ENCODE measurements at regions of chr17 and their contacts with region 1.

Region 1: GRCh38 chr17:4966844-4967538 is 626 bp downstream of the SPAG7 start:
- DNase-seq: peak; percentile 97
- ATAC-seq: peak; percentile 93
- H3K4me3 Mint-ChIP-seq: no peak overlapping the region
- H3K27ac Mint-ChIP-seq: peak overlapping the region; percentile 90
- H3K4me1 Mint-ChIP-seq: peaks cover 22% of the 10 kb centered on the region
- H3K27me3 Mint-ChIP-seq: peaks cover 10% of the 10 kb centered on the region
- CTCF ChIP-seq: no peak

Region 2: DNA sequence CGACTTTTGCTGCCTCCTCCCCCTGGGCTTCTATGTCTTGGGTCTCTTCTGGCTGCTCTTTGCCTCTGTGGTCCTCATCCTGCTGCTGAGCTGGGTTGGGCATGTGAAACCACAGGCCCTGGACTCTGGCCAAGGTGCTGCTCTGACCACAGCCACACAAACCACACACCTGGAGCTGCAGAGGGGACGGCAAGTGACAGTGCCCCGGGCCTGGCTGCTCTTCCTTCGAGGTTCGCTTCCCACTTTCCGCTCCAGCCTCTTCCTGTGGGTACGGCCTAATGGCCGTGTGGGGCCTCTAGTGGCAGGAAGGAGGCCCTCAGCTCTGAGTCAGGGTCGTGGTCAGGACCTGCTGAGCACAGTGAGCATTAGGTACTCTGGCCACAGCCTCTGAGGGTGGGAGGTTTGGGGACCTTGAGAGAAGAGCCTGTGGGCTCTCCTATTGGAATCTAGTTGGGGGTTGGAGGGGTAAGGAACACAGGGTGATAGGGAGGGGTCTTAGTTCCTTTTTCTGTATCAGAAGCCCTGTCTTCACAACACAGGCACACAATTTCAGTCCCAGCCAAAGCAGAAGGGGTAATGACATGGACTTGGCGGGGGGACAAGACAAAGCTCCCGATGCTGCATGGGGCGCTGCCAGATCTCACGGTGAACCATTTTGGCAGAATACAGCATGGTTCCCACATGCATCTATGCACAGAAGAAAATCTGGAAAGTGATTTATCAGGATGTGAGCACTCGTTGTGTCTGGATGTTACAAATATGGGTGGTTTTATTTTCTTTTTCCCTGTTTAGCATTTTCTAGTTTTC is 32.6 kb before region 1 on chr17:
- CTCF ChIA-PET with region 1: interaction called, 17 read pairs
- POLR2A ChIA-PET with region 1: interaction called, 38 read pairs
- DNase-seq: peak; percentile 50
- ATAC-seq: peak; percentile 81
- H3K4me3 Mint-ChIP-seq: no peak overlapping the region
- H3K27ac Mint-ChIP-seq: no peak overlapping the region; the same call in 1 of the 2 replicates
- H3K4me1 Mint-ChIP-seq: peaks cover 18% of the 10 kb centered on the region
- H3K27me3 Mint-ChIP-seq: no peaks in the 10 kb centered on the region
- CTCF ChIP-seq: no peak

Region 3: GRCh38 chr17:4948931-4949320 is 18.1 kb before region 1 on chr17:
- CTCF ChIA-PET with region 1: interaction called, 18 read pairs
- POLR2A ChIA-PET with region 1: interaction called, 45 read pairs
- DNase-seq: peak; percentile 78
- ATAC-seq: peak; percentile 40
- H3K4me3 Mint-ChIP-seq: peak overlapping the region; percentile 91
- H3K27ac Mint-ChIP-seq: peak overlapping the region; percentile 82; the same call in 1 of the 2 replicates
- H3K4me1 Mint-ChIP-seq: peaks cover 47% of the 10 kb centered on the region
- H3K27me3 Mint-ChIP-seq: no peaks in the 10 kb centered on the region
- CTCF ChIP-seq: no peak

Region 4: DNA sequence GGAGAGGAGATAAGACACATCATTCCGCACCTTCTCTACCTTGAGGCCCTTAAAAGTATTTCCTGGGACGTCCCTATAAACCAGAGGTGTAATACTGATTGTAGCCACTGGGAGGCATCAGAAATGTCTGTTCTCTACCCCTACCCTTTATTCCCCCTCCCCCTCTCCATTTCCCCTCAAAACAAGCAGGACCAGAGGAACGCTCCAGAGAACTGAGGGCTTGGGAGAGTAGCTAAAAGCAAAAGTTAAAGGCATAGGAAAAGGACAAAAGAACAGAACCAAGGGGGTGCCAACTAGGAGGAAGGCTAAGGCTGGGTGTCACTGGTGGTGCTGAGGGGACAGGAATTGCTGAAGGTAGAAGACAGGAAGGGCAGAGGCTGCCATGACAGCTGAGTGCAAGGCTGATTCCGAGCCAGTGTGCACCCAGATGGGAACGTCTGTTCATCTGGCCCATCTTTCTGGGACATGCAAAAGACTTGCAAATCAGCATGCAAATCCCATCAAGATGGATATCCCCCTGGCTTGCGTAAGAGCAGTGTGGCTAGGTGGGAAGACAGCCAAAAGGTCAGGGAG is 13.7 kb after region 1 on chr17:
- CTCF ChIA-PET with region 1: interaction called, 27 read pairs
- POLR2A ChIA-PET with region 1: no interaction called
- DNase-seq: peak; percentile 31
- ATAC-seq: peak; percentile 91
- H3K4me3 Mint-ChIP-seq: no peak overlapping the region
- H3K27ac Mint-ChIP-seq: no peak overlapping the region
- H3K4me1 Mint-ChIP-seq: peaks cover 5% of the 10 kb centered on the region
- H3K27me3 Mint-ChIP-seq: peaks cover 43% of the 10 kb centered on the region
- CTCF ChIP-seq: peak; percentile 78

Region 5: GRCh38 chr17:4997302-4998026 is 30.5 kb after region 1 on chr17 and contains the starts of genes INCA1 and KIF1C:
- CTCF ChIA-PET with region 1: interaction called, 6 read pairs
- POLR2A ChIA-PET with region 1: interaction called, 11 read pairs
- DNase-seq: peak; percentile 94
- ATAC-seq: peak; percentile 85
- H3K4me3 Mint-ChIP-seq: peak within 1 kb of the TSS; percentile 87
- H3K27ac Mint-ChIP-seq: peak within 1 kb of the TSS; percentile 57; the same call in 1 of the 2 replicates
- H3K4me1 Mint-ChIP-seq: peaks cover 16% of the 10 kb centered on the region
- H3K27me3 Mint-ChIP-seq: peaks cover 28% of the 10 kb centered on the region
- CTCF ChIP-seq: no peak
- total RNA-seq, gene INCA1: 0.61 to 1.1 TPM (median 1.1 TPM) in 3 replicates
- total RNA-seq, gene KIF1C: 112 to 130 TPM (median 115 TPM) in 3 replicates

Measured in WTC11 (cell line).